ENCODE measurements at regions of chr14 and their contacts with region 1.

Region 1: GRCh38 chr14:60184146-60184904 is 19.1 kb upstream of the DHRS7 start:
- DNase-seq: no peak
- H3K4me3 Mint-ChIP-seq: peak overlapping the region; percentile 58
- H3K27ac Mint-ChIP-seq: peak overlapping the region; percentile 85
- H3K4me1 Mint-ChIP-seq: peaks cover 17% of the 10 kb centered on the region
- H3K27me3 Mint-ChIP-seq: no peaks in the 10 kb centered on the region

Region 2: DNA sequence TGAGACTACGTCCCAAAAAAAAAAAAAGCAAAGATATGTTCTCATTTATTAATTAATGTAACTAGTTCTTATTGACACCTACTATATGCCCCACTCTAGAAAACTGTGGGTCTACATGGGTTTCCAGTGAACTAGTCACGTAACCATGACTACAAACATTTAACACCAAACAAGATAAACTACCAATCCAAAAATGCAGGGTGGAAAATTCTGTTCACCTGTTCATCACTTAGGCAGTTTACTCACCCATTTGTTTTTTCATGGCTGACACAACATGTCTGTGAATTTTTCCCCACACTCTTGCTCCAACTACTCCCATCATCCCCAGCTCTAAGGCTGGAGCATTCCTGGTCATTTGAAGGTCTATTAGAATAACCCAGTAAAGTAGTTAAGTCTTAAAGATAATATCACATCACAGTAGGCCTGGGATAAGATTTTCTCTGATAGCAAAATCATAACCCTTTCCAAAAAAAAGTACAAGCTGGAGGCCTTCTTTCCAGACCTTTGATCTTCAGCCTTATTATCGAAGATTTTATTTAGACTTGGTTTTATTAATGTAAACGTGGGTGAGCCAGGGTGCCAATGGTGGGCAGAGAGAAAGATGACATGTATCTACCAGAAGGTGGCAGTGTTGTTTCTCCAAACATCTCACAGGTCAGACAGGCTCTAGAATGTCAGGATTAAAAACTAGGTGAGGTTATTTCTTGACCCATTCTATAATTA is 1057.5 kb before region 1 on chr14:
- CTCF ChIA-PET with region 1: no interaction called
- POLR2A ChIA-PET with region 1: no interaction called
- intact Hi-C with region 1: loop called (anchors 1 kb)
- DNase-seq: peak; percentile 15
- H3K4me3 Mint-ChIP-seq: no peak overlapping the region
- H3K27ac Mint-ChIP-seq: no peak overlapping the region
- H3K4me1 Mint-ChIP-seq: no peaks in the 10 kb centered on the region
- H3K27me3 Mint-ChIP-seq: peaks cover 16% of the 10 kb centered on the region

Region 3: GRCh38 chr14:59576332-59577294 is 607.7 kb before region 1 on chr14 and contains the start of gene CCDC175:
- CTCF ChIA-PET with region 1: interaction called, 10 read pairs
- POLR2A ChIA-PET with region 1: no interaction called
- intact Hi-C with region 1: loop called (anchors 10 kb)
- DNase-seq: peak; percentile 89
- H3K4me3 Mint-ChIP-seq: peak within 1 kb of the TSS; percentile 74
- H3K27ac Mint-ChIP-seq: no peak within 1 kb of the TSS
- H3K4me1 Mint-ChIP-seq: peaks cover 9% of the 10 kb centered on the region
- H3K27me3 Mint-ChIP-seq: peaks cover 12% of the 10 kb centered on the region
- total RNA-seq, gene CCDC175: not detected

Region 4: DNA sequence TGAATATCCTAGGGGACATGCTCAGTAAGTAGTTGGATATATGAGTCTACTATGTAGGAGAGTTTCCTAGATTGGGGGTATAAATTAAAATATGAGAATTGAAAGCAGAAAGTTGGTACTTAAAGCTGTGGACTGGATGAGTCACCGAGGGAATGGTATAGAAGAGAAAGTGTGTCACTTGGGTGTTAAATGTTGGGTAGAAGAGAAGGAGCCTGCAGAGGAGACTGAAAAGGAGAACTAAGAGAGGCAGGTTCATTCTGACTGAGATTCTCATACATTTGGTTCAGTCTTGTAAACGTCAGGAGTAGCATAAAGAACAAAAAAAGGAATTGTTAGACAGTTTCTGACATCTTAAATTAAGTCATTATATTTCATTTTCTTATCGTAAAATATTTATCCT is 244.5 kb before region 1 on chr14:
- CTCF ChIA-PET with region 1: no interaction called
- POLR2A ChIA-PET with region 1: no interaction called
- intact Hi-C with region 1: no loop called
- DNase-seq: no peak
- H3K4me3 Mint-ChIP-seq: no peak overlapping the region
- H3K27ac Mint-ChIP-seq: no peak overlapping the region
- H3K4me1 Mint-ChIP-seq: no peaks in the 10 kb centered on the region
- H3K27me3 Mint-ChIP-seq: peaks cover 9% of the 10 kb centered on the region

Region 5: DNA sequence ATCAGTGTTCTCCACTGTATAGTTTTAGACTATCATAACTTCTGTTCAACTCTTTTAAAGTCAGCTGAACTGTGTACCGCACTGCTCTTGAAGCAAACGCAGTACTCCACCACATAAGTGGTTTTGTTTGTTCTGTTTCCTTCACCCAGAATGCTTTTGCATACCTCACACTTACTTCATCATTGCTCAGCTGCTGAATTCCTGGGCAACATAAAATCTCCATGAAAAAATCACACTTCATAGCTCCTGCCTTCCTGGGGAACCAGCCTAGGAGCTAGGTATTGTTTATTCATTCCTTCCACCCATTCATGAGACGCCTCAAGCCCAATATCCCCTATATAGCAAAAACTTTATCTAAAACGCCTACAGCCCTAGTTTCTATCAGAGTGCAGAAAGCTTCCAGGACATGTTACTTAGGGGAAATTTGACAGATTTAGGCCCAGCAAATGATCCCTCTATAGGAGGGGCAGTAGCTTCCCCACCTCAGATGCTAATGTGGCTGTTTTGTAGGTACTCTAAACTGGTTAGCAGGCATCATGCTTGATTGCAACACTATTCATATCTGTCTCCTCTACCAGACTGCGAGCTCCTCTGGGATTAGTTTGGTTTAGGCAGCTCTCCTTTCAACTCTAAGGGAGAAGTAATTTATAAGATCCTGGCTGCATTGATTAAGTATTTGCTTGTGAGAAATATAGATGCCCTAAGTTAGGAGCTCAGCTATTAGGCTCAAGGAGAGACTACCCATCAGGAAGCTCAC is 219.9 kb before region 1 on chr14:
- CTCF ChIA-PET with region 1: interaction called, 265 read pairs
- POLR2A ChIA-PET with region 1: interaction called, 3 read pairs
- intact Hi-C with region 1: loop called (anchors 1 kb)
- DNase-seq: no peak
- H3K4me3 Mint-ChIP-seq: peak overlapping the region; percentile 74
- H3K27ac Mint-ChIP-seq: peak overlapping the region; percentile 87
- H3K4me1 Mint-ChIP-seq: peaks cover 12% of the 10 kb centered on the region
- H3K27me3 Mint-ChIP-seq: no peaks in the 10 kb centered on the region

Region 6: GRCh38 chr14:60014402-60014801 is 169.9 kb before region 1 on chr14:
- CTCF ChIA-PET with region 1: no interaction called
- POLR2A ChIA-PET with region 1: no interaction called
- intact Hi-C with region 1: no loop called
- DNase-seq: no peak
- H3K4me3 Mint-ChIP-seq: no peak overlapping the region
- H3K27ac Mint-ChIP-seq: no peak overlapping the region
- H3K4me1 Mint-ChIP-seq: no peaks in the 10 kb centered on the region
- H3K27me3 Mint-ChIP-seq: peaks cover 2% of the 10 kb centered on the region

Region 7: GRCh38 chr14:60091550-60092530 is 92.5 kb before region 1 on chr14 and contains the start of gene PCNX4:
- CTCF ChIA-PET with region 1: interaction called, 4 read pairs
- POLR2A ChIA-PET with region 1: interaction called, 3 read pairs
- intact Hi-C with region 1: loop called (anchors 1 kb)
- DNase-seq: peak; percentile 95
- H3K4me3 Mint-ChIP-seq: peak within 1 kb of the TSS; percentile 95
- H3K27ac Mint-ChIP-seq: peak within 1 kb of the TSS; percentile 91
- H3K4me1 Mint-ChIP-seq: peaks cover 30% of the 10 kb centered on the region
- H3K27me3 Mint-ChIP-seq: no peaks in the 10 kb centered on the region
- total RNA-seq, gene PCNX4: 26.3 to 26.9 TPM

Region 8: DNA sequence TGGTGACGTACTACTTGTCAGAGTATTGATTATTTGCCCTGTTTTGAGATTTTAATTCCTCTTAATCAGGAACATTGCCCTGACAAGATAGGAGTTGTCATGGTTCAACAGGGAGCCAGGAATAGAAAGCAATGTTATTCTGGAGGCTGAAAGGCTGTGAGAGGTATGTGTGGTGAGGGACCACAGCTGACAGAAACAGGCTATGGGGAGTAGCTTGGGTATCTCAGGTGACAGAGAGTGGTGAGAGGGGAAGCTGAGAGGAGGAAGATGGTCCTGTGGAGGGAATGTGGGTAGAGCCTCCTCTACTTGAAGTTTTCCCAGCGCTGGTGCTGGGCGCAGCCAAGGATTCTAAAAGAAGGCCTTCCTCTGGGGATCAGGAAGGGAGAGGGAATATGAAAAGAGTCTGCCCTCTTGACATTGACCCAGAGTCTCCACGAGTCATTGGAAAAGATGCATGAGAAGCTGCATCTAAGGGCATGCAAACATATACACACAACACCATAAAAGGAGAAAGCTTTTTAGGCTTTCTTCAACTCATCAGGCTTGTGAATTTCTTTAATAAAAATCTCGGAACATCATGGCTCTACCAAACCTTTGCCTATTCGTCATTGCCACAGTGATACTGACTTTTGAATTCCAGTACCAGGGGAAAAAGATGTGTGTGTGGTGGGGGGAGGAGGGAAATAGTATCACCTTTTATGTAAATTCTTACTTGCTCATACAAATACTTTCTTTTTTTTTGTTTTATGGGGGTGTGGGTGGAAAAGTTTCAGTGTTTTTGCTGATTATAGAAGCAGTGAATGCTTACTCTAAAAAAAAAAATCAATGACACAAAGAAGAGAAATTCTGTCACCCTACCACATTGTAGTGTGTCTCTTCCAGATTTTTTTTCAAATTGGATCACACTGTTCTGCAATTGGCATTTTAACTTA is 20.8 kb after region 1 on chr14:
- CTCF ChIA-PET with region 1: interaction called, 7 read pairs
- POLR2A ChIA-PET with region 1: no interaction called
- intact Hi-C with region 1: loop called (anchors 1 kb)
- DNase-seq: no peak
- H3K4me3 Mint-ChIP-seq: no peak overlapping the region
- H3K27ac Mint-ChIP-seq: no peak overlapping the region
- H3K4me1 Mint-ChIP-seq: peaks cover 20% of the 10 kb centered on the region
- H3K27me3 Mint-ChIP-seq: peaks cover 20% of the 10 kb centered on the region

Measured in activated CD4-positive, alpha-beta memory T cell treated with anti-CD3 and anti-CD28 coated beads for 36 hours (primary cell).